Lower lobe of right lung (tissue), 2 donors: ENCODE measurements at regions of chr9 and their contacts with region 1.

Region 1: DNA sequence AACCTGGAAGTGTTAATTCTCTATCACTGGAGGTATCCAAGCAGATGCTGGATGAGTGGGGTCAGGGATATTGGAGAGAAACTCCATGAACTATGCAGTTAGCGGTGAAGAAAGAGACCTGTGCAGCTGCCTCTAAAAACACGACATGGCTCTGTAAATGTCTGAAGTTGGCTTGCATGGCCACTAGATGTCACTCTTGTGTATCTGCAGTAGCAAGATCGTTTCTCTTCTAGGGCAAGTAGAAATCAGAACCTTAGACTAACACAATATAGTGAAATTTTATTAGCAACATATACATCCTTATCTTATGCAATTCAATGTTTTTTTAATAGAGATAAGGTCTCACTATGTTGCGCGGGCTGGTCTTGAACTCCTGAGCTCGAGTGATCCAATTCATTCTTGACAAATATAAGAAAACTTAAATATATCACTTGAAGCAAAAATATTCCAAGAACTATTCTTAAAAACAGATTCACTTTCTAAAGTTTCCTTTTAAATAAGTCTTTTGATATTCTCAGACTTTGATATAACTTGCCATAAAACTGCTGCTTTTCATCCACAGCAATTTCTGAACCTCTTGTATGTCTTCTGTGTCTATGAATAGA is 2.9 kb downstream of the OR2S2 start:
- DNase-seq: no peak
- ATAC-seq: peak; percentile 80 to 87
- H3K4me3 ChIP-seq: no peak overlapping the region
- H3K27ac ChIP-seq: no peak overlapping the region
- H3K4me1 ChIP-seq: peaks cover 6% of the 10 kb centered on the region
- H3K27me3 ChIP-seq: no peaks in the 10 kb centered on the region
- CTCF ChIP-seq: peak; percentile 86

Region 2: DNA sequence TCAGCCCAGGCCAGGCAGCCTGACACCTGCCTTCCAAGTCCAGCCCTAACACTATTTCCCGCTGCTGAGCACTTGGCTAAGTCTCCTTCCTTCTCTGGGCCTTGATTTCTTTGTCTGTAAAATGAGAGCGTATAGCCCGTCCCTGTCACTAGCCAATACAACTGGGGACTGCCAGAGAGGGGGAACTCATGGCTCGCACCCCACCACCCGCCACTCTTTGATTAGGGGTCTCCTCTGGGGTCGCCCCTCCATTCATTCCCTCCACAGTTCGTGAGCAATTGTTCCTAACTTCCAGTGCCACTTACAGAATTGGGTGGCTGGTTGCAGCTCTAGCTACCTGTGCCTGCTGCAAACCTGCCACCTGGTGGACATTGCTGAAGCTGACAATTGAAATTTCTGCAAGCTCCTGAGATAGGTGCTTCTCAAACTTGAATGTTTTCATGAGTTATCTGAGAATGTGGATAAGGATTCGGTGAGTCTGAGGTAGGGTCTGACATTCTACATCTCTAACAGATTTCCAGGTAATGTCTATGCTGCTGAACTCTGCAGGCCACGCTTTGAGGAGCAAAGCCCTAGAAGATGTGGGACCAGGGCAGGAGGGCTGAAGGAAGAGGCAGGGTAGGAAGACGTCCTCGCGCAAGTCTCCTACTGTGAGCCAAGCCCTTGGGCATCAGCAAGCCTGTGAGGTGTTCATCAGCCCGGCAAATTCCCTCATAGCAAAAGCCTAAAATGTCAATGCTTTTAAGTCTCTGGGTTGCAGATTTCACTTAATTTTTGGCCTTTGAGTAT is 68.4 kb after region 1 on chr9:
- intact Hi-C with region 1: loop called (anchors 10 kb)
- DNase-seq: peak; percentile 59
- ATAC-seq: peak; percentile 75 to 87
- H3K4me3 ChIP-seq: no peak overlapping the region
- H3K27ac ChIP-seq: no peak overlapping the region
- H3K4me1 ChIP-seq: peaks cover 4% of the 10 kb centered on the region
- H3K27me3 ChIP-seq: no peaks in the 10 kb centered on the region
- CTCF ChIP-seq: peak; percentile 76